ENCODE measurements at regions of chr15 and their contacts with region 1.

Region 1: DNA sequence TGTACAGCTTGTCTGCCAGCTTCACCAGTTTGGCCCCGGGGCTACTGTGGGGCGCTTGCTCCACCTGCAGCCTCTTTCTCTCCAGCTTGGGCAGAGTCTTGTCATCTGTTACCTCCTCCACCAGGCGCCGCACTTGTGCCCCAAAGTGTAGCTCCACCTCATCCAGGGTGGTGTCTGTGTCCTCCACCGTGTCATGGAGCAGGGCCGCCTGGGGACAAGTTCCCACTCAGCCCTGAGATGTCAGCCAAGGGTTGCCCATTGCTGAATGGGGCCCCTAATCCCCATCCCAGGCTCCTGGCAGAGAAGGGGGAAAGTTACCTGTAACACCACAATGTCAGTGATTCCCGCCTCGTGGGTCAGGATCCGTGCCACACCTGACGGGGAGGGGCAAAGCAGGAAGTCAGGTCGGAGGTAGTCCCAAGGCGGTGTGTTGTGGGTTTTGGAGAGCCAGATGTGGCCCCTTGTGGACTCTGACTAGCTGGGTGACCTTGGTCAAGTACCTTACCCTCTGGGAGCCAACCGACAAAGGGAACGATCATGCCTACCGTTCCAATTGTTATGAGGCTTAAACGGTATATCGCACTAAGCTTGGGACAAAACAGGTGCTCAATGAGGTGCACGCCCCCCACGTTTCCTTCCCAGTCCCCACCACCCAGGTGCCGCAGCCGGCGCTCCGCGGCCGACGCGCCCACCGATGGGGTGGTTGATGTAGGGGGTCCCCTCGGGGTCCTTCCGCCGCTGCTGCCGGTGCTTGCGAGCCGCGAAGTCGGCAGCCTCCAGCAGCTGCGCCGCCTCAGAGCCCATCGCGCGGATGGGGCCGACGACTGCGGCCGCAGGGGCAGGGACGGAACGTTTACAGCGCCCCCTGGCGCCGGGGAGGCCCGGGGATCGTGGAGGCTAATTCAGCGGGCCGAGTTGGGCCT is at the start of gene HDDC3:
- DNase-seq: peak; percentile 80 to 94 (median 86)
- ATAC-seq: peak; percentile 74
- H3K4me3 ChIP-seq: peak within 1 kb of the TSS; percentile 66
- H3K27ac ChIP-seq: peak within 1 kb of the TSS; percentile 92
- H3K4me1 ChIP-seq: peaks cover 44 to 69% of the 10 kb centered on the region in 2 experiments
- H3K27me3 ChIP-seq: no peaks in the 10 kb centered on the region
- CTCF ChIP-seq: peak; percentile 92 to 98 (median 98)
- EP300 ChIP-seq: peak; percentile 40
- POLR2A ChIP-seq: peak; percentile 89
- RAD21 ChIP-seq: peak; percentile 49 to 74
- polyA plus RNA-seq, gene HDDC3: 14.9 to 21.3 TPM

Region 2: DNA sequence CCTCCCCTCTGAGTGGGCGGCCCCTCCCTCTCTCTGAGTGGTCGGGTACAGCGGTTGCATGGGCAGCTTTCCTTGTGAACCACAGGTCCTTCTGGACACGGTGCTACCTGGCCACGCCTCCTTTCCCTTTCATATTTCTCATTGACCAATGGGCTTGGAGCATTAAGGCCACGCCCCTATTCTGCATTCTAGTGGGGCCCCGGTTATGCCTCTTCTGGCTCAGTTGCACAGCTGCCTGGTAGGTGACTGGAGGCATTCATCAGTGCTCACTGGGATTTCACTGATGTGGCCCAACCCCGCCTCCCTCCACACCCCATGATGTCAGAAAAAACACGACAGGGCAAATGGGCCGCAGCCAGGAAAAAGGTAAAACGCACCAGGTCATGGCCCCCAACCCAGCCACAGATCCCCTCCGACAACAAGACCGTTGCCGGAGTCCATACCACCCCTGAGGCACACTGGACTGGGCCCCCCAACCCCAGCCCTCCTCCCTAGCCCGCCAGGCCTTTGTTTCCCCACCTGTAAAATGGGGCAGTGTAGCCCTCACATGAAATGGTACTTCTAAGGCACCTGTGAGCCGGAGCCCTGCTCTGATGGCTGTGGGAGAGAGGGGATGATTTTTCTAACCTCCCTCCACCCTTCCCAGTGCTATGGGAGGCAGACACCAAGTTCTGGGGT is 640.2 kb before region 1 on chr15:
- CTCF ChIA-PET with region 1: interaction called, 4 read pairs
- POLR2A ChIA-PET with region 1: no interaction called
- in situ Hi-C with region 1: no loop called
- intact Hi-C with region 1: loop called (anchors 10 kb)
- DNase-seq: peak; percentile 87 to 90 (median 90)
- ATAC-seq: peak; percentile 76
- H3K4me3 ChIP-seq: no peak overlapping the region
- H3K27ac ChIP-seq: no peak overlapping the region
- H3K4me1 ChIP-seq: peaks cover 0 to 27% of the 10 kb centered on the region in 2 experiments; a peak in 4 of 5 replicates
- H3K27me3 ChIP-seq: no peaks in the 10 kb centered on the region; a peak in 1 of 5 replicates
- CTCF ChIP-seq: no peak
- EP300 ChIP-seq: no peak
- POLR2A ChIP-seq: no peak
- RAD21 ChIP-seq: no peak

Region 3: GRCh38 chr15:90818251-90819210 is 113.5 kb before region 1 on chr15:
- CTCF ChIA-PET with region 1: no interaction called
- POLR2A ChIA-PET with region 1: no interaction called
- in situ Hi-C with region 1: no loop called
- intact Hi-C with region 1: loop called (anchors 5 kb)
- DNase-seq: peak in 3 of 4 experiments; percentile 35 to 49 (median 42)
- ATAC-seq: peak; percentile 75
- H3K4me3 ChIP-seq: no peak overlapping the region
- H3K27ac ChIP-seq: no peak overlapping the region
- H3K4me1 ChIP-seq: peaks cover 8 to 35% of the 10 kb centered on the region in 2 experiments; a peak in 4 of 5 replicates
- H3K27me3 ChIP-seq: no peaks in the 10 kb centered on the region
- CTCF ChIP-seq: peak; percentile 32 to 46 (median 44); a peak in 5 of 6 replicates
- EP300 ChIP-seq: no peak
- POLR2A ChIP-seq: no peak
- RAD21 ChIP-seq: peak in 1 of 2 experiments; percentile 41; a peak in 2 of 4 replicates

Region 4: DNA sequence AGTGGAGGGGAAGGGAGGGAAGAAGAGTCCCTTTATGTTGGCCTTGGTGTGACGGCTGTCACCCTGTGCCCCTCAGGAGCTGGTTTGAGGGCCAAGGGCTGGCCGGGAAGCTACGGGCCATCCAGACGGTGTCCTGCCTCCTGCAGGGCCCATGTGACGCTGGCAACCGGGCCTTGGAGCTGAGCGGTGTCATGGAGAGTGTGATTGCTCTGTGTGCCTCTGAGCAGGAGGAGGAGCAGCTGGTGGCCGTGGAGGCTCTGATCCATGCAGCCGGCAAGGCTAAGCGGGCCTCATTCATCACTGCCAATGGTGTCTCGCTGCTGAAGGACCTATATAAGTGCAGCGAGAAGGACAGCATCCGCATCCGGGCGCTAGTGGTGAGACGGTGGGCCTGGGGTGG is 14.5 kb after region 1 on chr15:
- CTCF ChIA-PET with region 1: no interaction called
- POLR2A ChIA-PET with region 1: interaction called, 20 read pairs
- in situ Hi-C with region 1: no loop called
- intact Hi-C with region 1: no loop called
- DNase-seq: no peak
- ATAC-seq: no peak
- H3K4me3 ChIP-seq: no peak overlapping the region
- H3K27ac ChIP-seq: no peak overlapping the region; the same call in 2 of the 3 replicates
- H3K4me1 ChIP-seq: peaks cover 13 to 32% of the 10 kb centered on the region in 2 experiments; a peak in 4 of 5 replicates
- H3K27me3 ChIP-seq: no peaks in the 10 kb centered on the region
- CTCF ChIP-seq: no peak
- EP300 ChIP-seq: no peak
- POLR2A ChIP-seq: no peak
- RAD21 ChIP-seq: no peak

Region 5: DNA sequence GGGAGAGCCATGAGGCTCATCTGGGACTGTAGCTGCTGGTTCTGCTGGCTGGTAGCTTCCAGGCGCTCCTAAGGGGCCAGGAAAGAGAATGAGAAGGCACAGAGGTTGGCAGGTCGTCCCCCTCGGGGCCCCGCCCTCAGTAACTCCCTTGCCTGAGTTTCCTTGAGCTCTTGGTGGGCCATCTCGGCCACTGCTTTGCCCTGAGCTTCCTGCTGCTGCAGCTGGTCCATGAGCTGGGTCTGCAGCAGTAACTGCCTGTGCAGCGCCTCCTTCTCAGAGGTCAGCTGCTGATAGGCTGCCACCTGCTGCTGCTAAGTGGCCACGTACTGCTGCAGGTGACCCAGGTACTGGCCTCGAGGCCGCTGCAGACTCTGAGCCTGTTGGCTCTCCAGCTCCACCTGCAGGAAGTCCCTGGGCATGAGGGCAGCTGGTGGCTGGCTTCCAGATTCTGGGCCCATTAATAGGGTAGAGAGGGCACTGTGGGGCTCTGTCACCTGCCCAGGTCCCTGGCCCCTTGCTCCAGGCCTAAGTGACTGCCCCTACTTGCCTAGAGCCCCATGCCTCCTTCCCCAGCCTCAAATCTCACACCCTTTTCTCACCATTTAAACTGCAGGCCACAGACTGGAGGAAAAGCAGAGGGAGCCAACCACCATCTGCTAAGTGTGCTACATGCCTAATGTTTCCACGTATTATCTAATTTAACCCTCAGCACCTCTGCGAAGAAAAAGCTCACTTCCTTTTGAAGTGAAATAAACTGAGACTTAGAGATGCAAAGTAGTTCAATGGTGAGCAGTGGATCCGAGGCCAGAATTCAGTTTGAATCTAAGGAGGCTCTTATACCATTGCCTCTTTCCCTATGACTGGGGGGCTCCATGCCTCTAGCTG is 101.2 kb after region 1 on chr15:
- CTCF ChIA-PET with region 1: interaction called, 3 read pairs
- POLR2A ChIA-PET with region 1: interaction called, 6 read pairs
- in situ Hi-C with region 1: no loop called
- intact Hi-C with region 1: loop called (anchors 5 kb)
- DNase-seq: peak; percentile 68 to 84 (median 74)
- ATAC-seq: peak; percentile 92
- H3K4me3 ChIP-seq: no peak overlapping the region
- H3K27ac ChIP-seq: no peak overlapping the region
- H3K4me1 ChIP-seq: peaks cover 0 to 22% of the 10 kb centered on the region in 2 experiments; a peak in 3 of 5 replicates
- H3K27me3 ChIP-seq: peaks cover 2 to 4% of the 10 kb centered on the region in 2 experiments; a peak in 3 of 5 replicates
- CTCF ChIP-seq: peak; percentile 85 to 90 (median 90)
- EP300 ChIP-seq: no peak
- POLR2A ChIP-seq: no peak
- RAD21 ChIP-seq: peak; percentile 68 to 90

Region 6: DNA sequence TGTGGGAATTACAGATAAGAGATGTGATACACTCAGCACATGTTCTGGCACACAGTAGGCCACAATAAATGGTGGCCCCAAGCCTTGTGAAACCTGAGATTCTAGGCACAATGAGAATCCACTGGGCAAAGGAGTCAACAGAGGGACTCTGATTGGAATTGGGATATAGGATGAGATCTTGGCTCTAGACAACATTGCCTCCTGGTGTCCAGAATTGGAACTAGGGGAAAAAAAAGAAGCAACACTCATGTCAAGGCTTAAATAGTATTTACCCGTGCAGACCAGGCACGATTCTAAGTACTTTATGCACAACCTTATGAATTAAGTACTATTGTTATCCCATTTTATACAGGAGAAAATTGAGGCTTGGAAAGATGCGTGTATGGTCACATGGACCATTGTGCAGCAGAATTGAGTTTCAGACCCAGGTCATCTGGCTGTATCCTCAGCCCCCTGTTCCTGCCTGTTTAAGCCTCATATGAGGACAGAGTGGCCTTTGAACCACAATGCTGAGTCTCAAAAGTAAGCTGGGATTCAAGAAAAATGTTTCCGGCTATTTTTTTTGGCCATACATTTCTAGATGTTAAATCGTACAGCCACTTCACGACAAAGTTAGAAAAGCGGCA is 292.9 kb after region 1 on chr15:
- CTCF ChIA-PET with region 1: no interaction called
- POLR2A ChIA-PET with region 1: interaction called, 3 read pairs
- in situ Hi-C with region 1: no loop called
- intact Hi-C with region 1: loop called (anchors 10 kb)
- DNase-seq: peak; percentile 48 to 60 (median 48)
- ATAC-seq: peak; percentile 84
- H3K4me3 ChIP-seq: no peak overlapping the region
- H3K27ac ChIP-seq: no peak overlapping the region
- H3K4me1 ChIP-seq: no peaks in the 10 kb centered on the region
- H3K27me3 ChIP-seq: peaks cover 13 to 36% of the 10 kb centered on the region in 2 experiments
- CTCF ChIP-seq: peak; percentile 60 to 87 (median 76)
- EP300 ChIP-seq: no peak
- POLR2A ChIP-seq: no peak
- RAD21 ChIP-seq: peak; percentile 71 to 89

Measured in K562 (cell line).